ENCODE measurements at regions of chr9 and their contacts with region 1.

Region 1: DNA sequence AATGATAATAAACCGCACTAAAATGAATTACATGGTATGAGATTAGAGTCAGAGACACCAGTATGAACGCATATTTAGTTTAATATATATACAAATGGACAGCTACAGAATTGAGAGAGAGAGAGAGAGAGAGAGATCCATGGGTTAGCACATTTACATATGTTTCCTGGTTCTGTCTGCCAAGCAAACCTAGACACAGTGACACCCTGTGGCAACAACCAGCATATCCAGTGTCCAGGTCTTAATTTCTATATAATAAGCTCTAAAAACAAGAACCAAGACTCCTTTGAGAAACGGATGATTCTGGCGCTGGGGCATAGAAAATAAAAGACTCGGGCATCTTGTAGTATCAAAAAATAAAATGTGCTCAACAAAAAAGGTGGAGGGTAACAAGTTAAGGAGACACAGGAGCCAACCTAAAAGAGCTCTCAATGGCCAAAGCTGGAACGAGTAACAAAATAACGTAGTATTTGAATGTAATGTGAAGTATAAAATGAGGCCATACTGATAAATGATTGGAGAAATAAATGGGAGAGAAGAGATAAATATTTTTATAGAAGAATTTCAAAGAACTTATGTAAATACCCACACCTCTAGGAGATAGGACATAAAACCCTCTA is 84.5 kb downstream of the RFX3 start:
- DNase-seq: peak in 3 of 6 donors; percentile 31 to 61 (median 45)
- ATAC-seq: peak; percentile 72 to 99 (median 95)
- H3K4me3 ChIP-seq: no peak overlapping the region
- H3K27ac ChIP-seq: no peak overlapping the region
- H3K4me1 ChIP-seq: no peaks in the 10 kb centered on the region
- H3K27me3 ChIP-seq: no peaks in the 10 kb centered on the region
- CTCF ChIP-seq: peak in 3 of 4 donors; percentile 45 to 51 (median 48)

Region 2: GRCh38 chr9:3125597-3126405 is 315.5 kb before region 1 on chr9:
- intact Hi-C with region 1: no loop called
- DNase-seq: no peak
- ATAC-seq: peak in 2 of 4 donors; percentile 30 to 61
- H3K4me3 ChIP-seq: no peak overlapping the region
- H3K27ac ChIP-seq: no peak overlapping the region
- H3K4me1 ChIP-seq: no peaks in the 10 kb centered on the region
- H3K27me3 ChIP-seq: no peaks in the 10 kb centered on the region
- CTCF ChIP-seq: no peak

Region 3: GRCh38 chr9:3240656-3241268 is 200.5 kb before region 1 on chr9:
- intact Hi-C with region 1: loop called in 1 of 3 experiments (anchors 10 kb)
- DNase-seq: peak in 5 of 6 donors; percentile 40 to 75 (median 67)
- ATAC-seq: peak; percentile 86 to 98 (median 98)
- H3K4me3 ChIP-seq: no peak overlapping the region
- H3K27ac ChIP-seq: peak overlapping the region in 1 of 4 donors; percentile 28
- H3K4me1 ChIP-seq: peaks cover 0 to 14% (median 10%) of the 10 kb centered on the region in 3 donors
- H3K27me3 ChIP-seq: no peaks in the 10 kb centered on the region
- CTCF ChIP-seq: peak; percentile 55 to 78 (median 71)

Region 4: GRCh38 chr9:3331817-3332216 is 109.5 kb before region 1 on chr9:
- intact Hi-C with region 1: loop called in 1 of 3 experiments (anchors 10 kb)
- DNase-seq: no peak
- ATAC-seq: peak in 1 of 4 donors; percentile 77
- H3K4me3 ChIP-seq: no peak overlapping the region
- H3K27ac ChIP-seq: no peak overlapping the region
- H3K4me1 ChIP-seq: no peaks in the 10 kb centered on the region
- H3K27me3 ChIP-seq: no peaks in the 10 kb centered on the region
- CTCF ChIP-seq: peak in 1 of 4 donors; percentile 21

Region 5: GRCh38 chr9:3708751-3709150 is 267.4 kb after region 1 on chr9:
- intact Hi-C with region 1: no loop called
- DNase-seq: no peak
- ATAC-seq: peak in 2 of 4 donors; percentile 55
- H3K4me3 ChIP-seq: no peak overlapping the region
- H3K27ac ChIP-seq: no peak overlapping the region
- H3K4me1 ChIP-seq: no peaks in the 10 kb centered on the region
- H3K27me3 ChIP-seq: no peaks in the 10 kb centered on the region
- CTCF ChIP-seq: no peak